ENCODE measurements at regions of chr3 and their contacts with region 1.

Region 1: DNA sequence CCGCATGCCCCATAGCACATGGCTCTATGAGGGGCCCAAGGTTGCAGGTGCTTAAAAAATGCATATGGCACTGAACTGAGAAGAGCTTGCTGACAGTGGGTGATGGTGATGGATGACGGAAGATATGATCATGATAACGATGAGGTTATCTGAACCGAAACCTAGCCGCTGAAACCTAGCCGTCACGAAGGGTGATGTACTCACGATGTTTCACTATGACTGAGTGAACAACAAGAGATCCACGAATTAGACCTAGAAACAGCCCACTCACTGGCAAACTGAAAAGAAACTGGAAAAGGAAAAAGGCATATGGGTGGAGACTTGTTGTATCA is 57.6 kb upstream of the BCL6 start:
- DNase-seq: peak; percentile 94
- H3K4me3 Mint-ChIP-seq: peak overlapping the region; percentile 36
- H3K27ac Mint-ChIP-seq: peak overlapping the region; percentile 97
- H3K4me1 Mint-ChIP-seq: peaks cover 90% of the 10 kb centered on the region
- H3K27me3 Mint-ChIP-seq: no peaks in the 10 kb centered on the region

Region 2: DNA sequence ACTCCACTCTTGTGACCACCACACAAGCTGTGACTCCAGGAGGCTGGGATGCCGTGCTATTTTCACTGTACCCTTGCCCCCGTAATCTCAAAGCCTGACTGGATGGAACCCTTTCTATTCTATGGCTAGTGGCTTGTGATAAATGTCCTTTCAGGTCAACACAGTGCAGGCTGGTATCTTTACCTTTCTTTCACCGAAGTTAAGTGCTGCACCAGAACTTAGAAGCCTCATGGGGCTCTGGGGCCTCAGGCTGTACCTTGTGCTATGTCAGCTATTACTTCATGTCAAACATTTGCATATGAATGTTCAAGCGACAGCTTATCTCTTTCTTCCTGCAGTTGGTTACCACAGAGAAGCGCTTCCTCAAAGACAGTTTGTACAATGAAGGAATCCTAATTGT is 730.4 kb before region 1 on chr3:
- intact Hi-C with region 1: no loop called
- DNase-seq: peak; percentile 53
- H3K4me3 Mint-ChIP-seq: no peak overlapping the region
- H3K27ac Mint-ChIP-seq: no peak overlapping the region
- H3K4me1 Mint-ChIP-seq: peaks cover 9% of the 10 kb centered on the region
- H3K27me3 Mint-ChIP-seq: no peaks in the 10 kb centered on the region

Region 3: GRCh38 chr3:187679638-187680396 is 123.1 kb before region 1 on chr3:
- intact Hi-C with region 1: no loop called
- DNase-seq: peak; percentile 90
- H3K4me3 Mint-ChIP-seq: no peak overlapping the region
- H3K27ac Mint-ChIP-seq: no peak overlapping the region
- H3K4me1 Mint-ChIP-seq: peaks cover 7% of the 10 kb centered on the region
- H3K27me3 Mint-ChIP-seq: peaks cover 41% of the 10 kb centered on the region

Region 4: DNA sequence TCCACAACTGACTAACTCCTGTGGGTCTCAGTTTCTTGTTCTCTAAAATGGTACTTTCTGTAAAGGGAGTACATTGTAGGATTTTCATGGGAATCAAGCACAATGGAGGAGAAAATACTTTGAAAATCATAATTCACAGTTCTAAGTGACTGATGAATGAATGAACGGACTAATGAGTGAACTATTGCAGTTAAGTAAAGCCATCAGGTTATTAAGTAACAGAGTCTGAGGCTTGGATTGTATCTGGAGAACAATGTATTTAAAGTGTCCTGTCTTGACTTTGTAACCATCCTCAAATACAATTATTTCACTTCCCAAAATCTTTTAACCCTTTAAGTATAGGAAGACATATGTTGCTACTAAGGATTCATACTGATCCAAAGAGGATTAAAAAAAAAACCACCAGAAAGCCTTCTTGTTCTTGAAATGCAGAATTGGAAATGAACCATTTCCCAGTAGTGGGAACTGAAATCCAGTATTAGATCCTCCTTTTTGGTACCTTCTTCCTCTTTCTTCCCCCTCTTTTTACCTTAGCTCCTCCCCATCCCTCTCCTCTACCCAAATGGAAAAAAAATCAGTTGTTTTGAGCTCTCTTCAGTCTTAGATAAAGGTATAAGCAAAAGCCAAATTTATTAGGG is 44.5 kb before region 1 on chr3:
- intact Hi-C with region 1: no loop called
- DNase-seq: no peak
- H3K4me3 Mint-ChIP-seq: no peak overlapping the region
- H3K27ac Mint-ChIP-seq: no peak overlapping the region
- H3K4me1 Mint-ChIP-seq: no peaks in the 10 kb centered on the region
- H3K27me3 Mint-ChIP-seq: no peaks in the 10 kb centered on the region

Region 5: GRCh38 chr3:187777331-187777941 is 25.5 kb before region 1 on chr3:
- intact Hi-C with region 1: loop called (anchors 1 kb)
- DNase-seq: peak; percentile 82
- H3K4me3 Mint-ChIP-seq: peak overlapping the region; percentile 58
- H3K27ac Mint-ChIP-seq: peak overlapping the region; percentile 93
- H3K4me1 Mint-ChIP-seq: peaks cover 48% of the 10 kb centered on the region
- H3K27me3 Mint-ChIP-seq: no peaks in the 10 kb centered on the region

Region 6: DNA sequence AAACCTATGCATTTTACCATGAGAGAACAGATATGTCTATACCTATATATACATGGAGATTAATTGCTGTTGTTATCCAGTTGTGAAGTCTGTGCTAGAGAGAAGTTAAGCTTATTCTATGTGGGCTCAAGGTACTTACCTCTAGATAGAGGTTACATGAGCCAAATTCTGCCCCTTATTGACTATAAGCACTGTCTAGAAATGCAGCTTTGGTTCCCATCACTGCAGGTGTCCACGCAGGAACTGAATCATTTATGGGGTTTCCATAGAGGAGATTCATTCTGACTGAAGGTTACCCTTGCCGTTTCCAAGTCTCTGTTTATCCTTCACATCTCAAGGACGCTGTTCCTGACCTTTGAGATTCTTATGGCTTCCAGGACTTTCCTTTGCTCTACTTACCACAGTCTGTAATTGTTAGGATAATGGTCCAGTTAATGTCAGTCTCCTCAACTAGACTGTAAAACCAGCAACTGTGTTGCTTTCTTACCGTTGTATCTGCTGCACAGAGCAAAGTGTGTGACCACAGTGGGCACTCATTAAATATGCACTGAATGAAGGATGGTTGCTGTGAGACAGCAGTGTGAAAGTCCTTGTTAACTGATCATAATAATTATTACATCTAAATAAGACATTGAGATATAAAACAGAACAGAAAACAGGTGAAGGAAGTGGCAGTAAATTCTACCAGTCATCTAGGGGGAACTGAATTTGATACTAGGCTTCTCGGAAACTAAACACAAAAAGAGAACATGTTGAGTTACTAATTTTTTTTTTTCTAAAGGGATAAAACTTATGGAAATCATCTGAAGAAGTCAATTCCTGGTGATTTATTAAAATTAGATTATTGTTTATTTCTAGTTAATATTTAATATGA is 13.7 kb before region 1 on chr3:
- intact Hi-C with region 1: no loop called
- DNase-seq: no peak
- H3K4me3 Mint-ChIP-seq: no peak overlapping the region
- H3K27ac Mint-ChIP-seq: peak overlapping the region; percentile 45
- H3K4me1 Mint-ChIP-seq: peaks cover 20% of the 10 kb centered on the region
- H3K27me3 Mint-ChIP-seq: no peaks in the 10 kb centered on the region

Region 7: DNA sequence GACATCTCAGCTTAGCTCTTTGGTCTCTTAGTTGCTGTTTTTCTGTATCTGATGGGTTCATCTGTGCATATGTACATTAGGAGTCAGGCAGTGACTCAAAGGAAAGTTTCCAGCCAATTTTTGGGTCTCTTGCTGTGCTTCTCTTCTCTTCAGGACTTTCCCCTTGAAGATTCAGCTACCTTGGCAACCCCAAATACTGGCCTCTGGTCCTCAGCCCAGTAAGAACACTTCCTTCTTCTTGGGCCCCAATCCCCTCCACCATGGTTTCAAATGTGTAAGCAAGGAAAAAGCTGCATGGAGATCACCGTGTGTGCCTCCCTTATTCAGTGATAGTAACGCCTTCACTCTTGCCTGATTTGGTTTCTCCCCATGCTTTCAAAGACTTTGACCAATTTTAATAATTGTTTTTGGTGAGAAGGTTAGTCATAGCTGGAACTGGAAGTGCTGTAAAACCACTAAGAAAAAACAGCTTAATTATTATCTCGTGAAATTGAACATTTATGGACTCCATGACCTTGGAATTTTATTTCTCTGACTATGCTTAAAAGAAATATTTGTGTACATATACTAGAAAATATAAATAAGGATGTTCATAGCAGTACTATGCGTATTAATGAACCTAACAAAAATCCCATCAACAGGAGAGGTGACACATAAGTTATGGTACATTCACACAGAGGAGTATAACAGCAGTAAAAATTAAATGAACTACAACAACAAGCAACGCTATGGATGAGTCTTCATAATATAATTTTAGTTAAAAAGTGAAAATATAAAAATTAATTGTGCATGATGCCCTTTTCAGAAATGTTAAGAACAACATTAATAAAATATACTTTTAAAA is 67.7 kb after region 1 on chr3:
- intact Hi-C with region 1: loop called (anchors 2 kb)
- DNase-seq: no peak
- H3K4me3 Mint-ChIP-seq: no peak overlapping the region
- H3K27ac Mint-ChIP-seq: peak overlapping the region; percentile 90
- H3K4me1 Mint-ChIP-seq: peaks cover 24% of the 10 kb centered on the region
- H3K27me3 Mint-ChIP-seq: no peaks in the 10 kb centered on the region

Region 8: GRCh38 chr3:188123170-188123905 is 320.4 kb after region 1 on chr3:
- intact Hi-C with region 1: loop called (anchors 2 kb)
- DNase-seq: no peak
- H3K4me3 Mint-ChIP-seq: no peak overlapping the region
- H3K27ac Mint-ChIP-seq: peak overlapping the region; percentile 45
- H3K4me1 Mint-ChIP-seq: peaks cover 17% of the 10 kb centered on the region
- H3K27me3 Mint-ChIP-seq: peaks cover 5% of the 10 kb centered on the region

Region 9: GRCh38 chr3:188294823-188295487 is 492.1 kb after region 1 on chr3:
- intact Hi-C with region 1: loop called (anchors 5 kb)
- DNase-seq: no peak
- H3K4me3 Mint-ChIP-seq: no peak overlapping the region
- H3K27ac Mint-ChIP-seq: no peak overlapping the region
- H3K4me1 Mint-ChIP-seq: peaks cover 71% of the 10 kb centered on the region
- H3K27me3 Mint-ChIP-seq: no peaks in the 10 kb centered on the region

Region 10: DNA sequence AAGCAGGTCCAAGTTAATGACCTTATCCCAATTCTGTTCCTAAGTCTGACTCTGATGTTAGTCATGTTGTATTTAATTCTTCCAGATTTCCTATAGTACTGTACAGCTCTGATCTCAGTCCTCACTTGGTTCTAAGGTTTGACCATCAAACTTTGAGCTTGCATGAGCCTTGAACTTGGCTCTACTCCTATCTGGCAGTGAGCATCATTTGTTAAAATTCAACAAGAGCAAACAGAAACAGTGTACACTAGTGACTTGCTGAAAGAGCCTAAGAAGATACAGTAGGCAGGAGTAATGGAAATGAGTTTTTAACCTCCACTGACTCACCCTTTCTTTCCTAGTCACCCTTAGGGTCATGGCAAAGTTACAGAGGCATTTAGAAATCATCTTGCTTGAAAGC is 917.7 kb after region 1 on chr3:
- intact Hi-C with region 1: loop called (anchors 10 kb)
- DNase-seq: no peak
- H3K4me3 Mint-ChIP-seq: no peak overlapping the region
- H3K27ac Mint-ChIP-seq: no peak overlapping the region
- H3K4me1 Mint-ChIP-seq: peaks cover 13% of the 10 kb centered on the region
- H3K27me3 Mint-ChIP-seq: peaks cover 4% of the 10 kb centered on the region